ENCODE measurements at regions of chr19 and their contacts with region 1.

Region 1: DNA sequence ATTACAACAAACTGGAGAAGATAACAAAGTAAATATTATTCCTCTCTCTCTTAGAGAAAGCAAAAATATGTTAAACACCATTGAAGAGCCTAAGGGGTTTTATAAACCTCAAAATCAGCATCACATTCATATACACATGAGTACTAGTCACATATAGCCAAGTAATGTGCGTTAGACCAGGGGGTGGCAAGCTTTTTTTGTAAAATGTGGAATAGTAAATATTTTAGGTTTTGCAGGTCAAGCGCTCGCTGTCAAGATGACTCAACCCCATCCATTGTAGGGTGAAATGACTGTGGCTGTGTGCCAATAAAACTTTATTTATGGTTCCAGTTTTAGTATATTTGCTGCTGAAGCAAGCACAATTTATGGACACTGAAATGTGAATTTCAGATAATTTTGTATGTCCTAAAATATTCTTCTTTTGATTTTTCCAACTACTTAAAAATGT is 21.7 kb downstream of the RFX2 start:
- DNase-seq: no peak
- H3K4me3 Mint-ChIP-seq: no peak overlapping the region
- H3K27ac Mint-ChIP-seq: no peak overlapping the region
- H3K4me1 Mint-ChIP-seq: peaks cover 22% of the 10 kb centered on the region
- H3K27me3 Mint-ChIP-seq: peaks cover 1% of the 10 kb centered on the region

Region 2: GRCh38 chr19:6100284-6100915 is 11.8 kb after region 1 on chr19:
- CTCF ChIA-PET with region 1: interaction called, 13 read pairs
- POLR2A ChIA-PET with region 1: no interaction called
- DNase-seq: peak; percentile 33
- H3K4me3 Mint-ChIP-seq: peak overlapping the region; percentile 40
- H3K27ac Mint-ChIP-seq: peak overlapping the region; percentile 78
- H3K4me1 Mint-ChIP-seq: peaks cover 10% of the 10 kb centered on the region
- H3K27me3 Mint-ChIP-seq: no peaks in the 10 kb centered on the region